Adrenal gland (tissue), 19 donors: ENCODE measurements at regions of chr11 and their contacts with region 1.

Region 1: DNA sequence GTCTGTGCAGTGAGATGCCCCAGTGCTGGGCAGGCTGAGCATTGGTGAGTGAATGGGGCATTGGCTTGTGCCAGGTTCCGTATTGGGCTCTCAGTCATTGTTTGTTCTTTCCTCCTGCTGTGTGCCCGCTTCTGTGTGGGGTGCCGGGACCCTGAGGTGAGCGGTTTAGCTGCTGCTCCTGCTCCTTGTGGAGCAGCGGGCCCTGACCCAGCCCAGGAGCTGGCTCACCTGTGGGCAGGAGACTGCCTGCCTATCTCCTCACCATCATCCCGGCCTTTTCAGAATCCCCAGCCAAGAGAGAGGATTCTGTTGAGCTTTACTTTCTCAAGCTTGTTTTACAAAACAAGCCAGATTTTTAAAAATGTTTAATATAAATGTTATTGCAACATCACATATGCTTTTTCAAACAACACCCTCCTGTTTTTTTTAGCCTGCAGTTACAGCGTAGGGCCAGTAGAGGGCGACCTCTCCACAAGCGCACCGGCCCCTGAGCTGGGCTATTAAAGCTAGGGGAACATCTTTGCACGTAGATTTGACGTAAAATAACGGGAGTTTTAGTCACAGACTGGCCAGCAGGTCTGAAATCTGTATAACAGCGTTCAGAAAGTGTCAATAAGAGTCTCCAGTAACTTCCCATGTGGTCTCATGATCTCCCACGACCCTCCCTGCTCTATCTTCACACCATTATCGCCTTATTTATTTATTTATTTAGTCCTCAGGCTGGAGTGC is 25.1 kb upstream of the RELT start:
- DNase-seq: peak in 6 of 7 donors; percentile 50 to 88 (median 66)
- H3K4me3 ChIP-seq: no peak overlapping the region
- H3K27ac ChIP-seq: peak overlapping the region in 1 of 5 donors; percentile 14
- H3K4me1 ChIP-seq: no peaks in the 10 kb centered on the region
- H3K27me3 ChIP-seq: no peaks in the 10 kb centered on the region
- CTCF ChIP-seq: peak; percentile 90 to 99 (median 94)
- POLR2A ChIP-seq: no peak

Region 2: DNA sequence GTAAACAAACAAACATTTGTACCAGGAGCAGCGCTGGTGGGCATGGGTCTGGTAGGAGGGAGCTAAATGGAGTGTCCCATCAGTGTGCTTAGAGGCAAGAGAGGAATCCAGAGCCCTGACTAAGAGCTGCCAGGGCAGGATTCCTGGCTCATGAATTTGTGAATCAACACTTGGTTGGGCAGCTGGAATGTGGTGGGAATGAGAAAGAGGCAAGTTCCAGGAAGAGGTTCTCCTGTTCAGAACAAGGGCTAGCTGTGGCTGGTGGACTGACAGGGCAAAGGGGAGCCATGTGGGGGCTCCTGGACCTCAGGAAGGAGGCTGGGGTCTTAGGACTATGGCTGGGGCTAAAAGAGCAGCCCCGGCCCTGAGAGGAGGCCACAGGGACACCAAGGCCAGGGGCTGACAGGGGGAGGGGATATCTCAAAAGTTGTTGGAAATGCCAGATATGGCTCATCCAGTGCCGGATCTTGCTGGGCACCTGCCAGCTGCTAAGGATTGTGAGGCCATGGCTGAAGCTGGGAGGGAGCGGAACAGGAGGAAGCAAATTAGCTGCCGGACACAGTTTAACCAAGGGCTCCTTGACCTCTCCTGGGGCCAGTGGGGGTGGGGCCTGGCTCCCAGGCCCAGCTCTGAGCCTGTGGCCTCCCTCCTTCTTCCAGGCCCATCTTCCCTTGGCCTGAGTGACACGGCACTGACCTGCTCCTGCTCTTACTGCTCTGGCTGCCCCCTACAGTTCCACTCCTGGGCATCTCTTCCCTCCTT is 93.5 kb before region 1 on chr11:
- intact Hi-C with region 1: no loop called
- DNase-seq: peak; percentile 47 to 89 (median 79)
- H3K4me3 ChIP-seq: no peak overlapping the region
- H3K27ac ChIP-seq: peak overlapping the region in 3 of 5 donors; percentile 48 to 82 (median 68)
- H3K4me1 ChIP-seq: peaks cover 0 to 11% of the 10 kb centered on the region in 2 donors
- H3K27me3 ChIP-seq: no peaks in the 10 kb centered on the region
- CTCF ChIP-seq: no peak
- POLR2A ChIP-seq: no peak

Region 3: DNA sequence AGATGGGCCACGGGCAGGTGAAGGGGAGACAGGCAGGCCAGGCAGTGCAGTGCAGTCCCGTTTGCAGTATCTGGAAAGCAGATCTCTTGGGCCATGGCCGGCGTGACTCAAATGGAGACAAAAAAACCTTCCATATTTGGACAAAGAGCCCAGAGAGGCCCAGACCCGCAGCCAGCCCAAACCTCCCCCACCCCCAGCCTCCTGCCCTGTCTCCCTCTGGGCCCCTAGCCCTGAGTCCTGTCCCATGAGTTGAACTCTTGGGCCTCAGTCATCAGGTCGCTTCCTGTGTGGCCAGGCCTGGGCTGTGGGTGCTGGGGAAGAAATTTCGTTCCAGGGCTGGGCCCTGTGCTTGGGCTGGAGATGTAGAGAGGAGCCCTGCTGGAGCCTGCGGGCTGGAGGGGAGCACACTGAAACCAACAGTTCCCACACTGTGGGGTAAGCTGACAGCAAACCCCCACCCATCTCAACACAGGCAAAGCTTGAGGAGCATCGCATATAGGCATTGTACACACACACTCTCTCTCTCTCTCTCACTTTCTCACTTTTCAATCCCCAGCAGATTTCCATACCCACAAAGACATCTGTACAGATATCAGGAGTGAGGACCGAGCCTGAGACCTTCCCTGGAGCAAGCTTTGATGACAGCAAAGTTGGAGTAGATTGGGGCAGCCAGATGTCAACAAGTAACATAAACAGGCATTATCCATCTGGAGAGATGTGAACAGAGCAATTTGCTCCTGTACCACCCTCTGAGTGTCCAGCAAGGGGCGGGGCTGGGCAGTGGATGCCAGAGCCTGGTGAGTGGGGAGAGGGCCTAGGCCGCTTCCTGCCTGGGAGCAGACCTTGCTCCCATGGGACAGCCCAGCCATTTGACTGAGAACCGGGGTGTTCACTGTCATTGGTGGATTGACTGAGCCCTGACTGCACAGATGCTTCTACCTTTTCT is 25.8 kb before region 1 on chr11:
- intact Hi-C with region 1: no loop called
- DNase-seq: no peak
- H3K4me3 ChIP-seq: no peak overlapping the region
- H3K27ac ChIP-seq: peak overlapping the region in 3 of 5 donors; percentile 72 to 90 (median 74)
- H3K4me1 ChIP-seq: peaks cover 6 to 49% of the 10 kb centered on the region in 2 donors
- H3K27me3 ChIP-seq: no peaks in the 10 kb centered on the region
- CTCF ChIP-seq: no peak
- POLR2A ChIP-seq: no peak

Region 4: GRCh38 chr11:73393479-73394380 is 42.7 kb after region 1 on chr11:
- intact Hi-C with region 1: loop called (anchors 2 to 5 kb)
- DNase-seq: peak; percentile 74 to 92 (median 82)
- H3K4me3 ChIP-seq: no peak overlapping the region
- H3K27ac ChIP-seq: no peak overlapping the region
- H3K4me1 ChIP-seq: no peaks in the 10 kb centered on the region
- H3K27me3 ChIP-seq: no peaks in the 10 kb centered on the region
- CTCF ChIP-seq: peak; percentile 62 to 89 (median 85)
- POLR2A ChIP-seq: no peak

Region 5: GRCh38 chr11:74232311-74232950 is 881.4 kb after region 1 on chr11:
- intact Hi-C with region 1: no loop called
- DNase-seq: no peak
- H3K4me3 ChIP-seq: no peak overlapping the region
- H3K27ac ChIP-seq: no peak overlapping the region
- H3K4me1 ChIP-seq: peaks cover 7 to 12% of the 10 kb centered on the region in 2 donors
- H3K27me3 ChIP-seq: no peaks in the 10 kb centered on the region
- CTCF ChIP-seq: no peak
- POLR2A ChIP-seq: no peak